Right ventricle myocardium inferior (tissue), 1 donor: ENCODE measurements at regions of chr5 and their contacts with region 1.

Region 1: GRCh38 chr5:138132543-138132942 is 6.7 kb downstream of the NME5 start:
- DNase-seq: no peak
- ATAC-seq: no peak

Region 2: DNA sequence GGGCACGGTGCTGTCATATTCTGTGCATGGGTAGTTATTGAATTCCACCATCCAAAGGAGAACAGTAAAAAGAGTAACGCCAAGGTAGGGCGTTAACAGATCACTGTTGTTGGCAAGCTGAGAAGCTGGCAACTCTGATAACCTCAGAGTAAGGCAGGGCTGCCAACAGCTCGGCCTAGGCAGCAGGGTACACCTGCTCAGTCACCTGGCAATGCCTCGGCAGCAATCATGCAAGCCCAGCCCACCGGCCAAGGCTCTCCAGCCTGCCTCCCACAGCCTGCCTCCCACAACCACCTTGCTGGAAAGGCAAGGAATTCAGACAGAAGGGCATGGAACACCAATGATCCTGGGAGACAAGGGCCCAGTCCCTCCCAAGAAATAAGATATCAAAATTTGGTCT is 460.5 kb before region 1 on chr5:
- intact Hi-C with region 1: no loop called
- DNase-seq: no peak
- ATAC-seq: no peak

Region 3: DNA sequence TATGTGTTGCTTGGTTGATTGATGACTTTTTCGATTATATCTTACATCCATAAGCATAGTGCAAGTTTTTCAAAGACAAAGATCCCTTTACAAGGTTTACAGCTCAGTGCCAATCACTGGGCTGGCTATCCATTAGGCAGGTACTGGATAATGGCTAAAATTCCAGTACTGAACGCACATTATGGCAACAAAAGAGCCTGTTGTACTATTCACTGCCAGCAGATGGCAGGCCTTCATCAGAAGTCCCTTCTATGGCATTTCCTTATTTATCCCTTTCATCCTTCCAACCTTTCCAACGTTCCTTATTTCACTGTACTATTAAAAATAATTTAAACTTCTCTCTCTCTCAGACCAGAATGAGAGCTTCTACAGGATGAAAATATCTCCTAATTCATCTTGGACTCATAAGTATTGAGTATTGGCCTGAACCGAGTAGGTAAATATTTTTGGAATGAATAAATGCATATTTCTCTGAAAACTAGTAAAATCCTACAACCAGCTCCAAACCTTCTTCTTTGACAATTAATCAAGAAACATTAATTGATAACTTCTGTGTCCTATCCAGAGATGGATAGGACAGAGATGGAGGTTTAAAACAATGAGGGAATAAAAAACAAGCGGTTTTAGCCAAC is 55.4 kb before region 1 on chr5:
- intact Hi-C with region 1: loop called (anchors 2 kb)
- DNase-seq: peak; percentile 75
- ATAC-seq: peak; percentile 72